CD4-positive, alpha-beta memory T cell (primary cell): ENCODE measurements at regions of chr10 and their contacts with region 1.

Region 1: DNA sequence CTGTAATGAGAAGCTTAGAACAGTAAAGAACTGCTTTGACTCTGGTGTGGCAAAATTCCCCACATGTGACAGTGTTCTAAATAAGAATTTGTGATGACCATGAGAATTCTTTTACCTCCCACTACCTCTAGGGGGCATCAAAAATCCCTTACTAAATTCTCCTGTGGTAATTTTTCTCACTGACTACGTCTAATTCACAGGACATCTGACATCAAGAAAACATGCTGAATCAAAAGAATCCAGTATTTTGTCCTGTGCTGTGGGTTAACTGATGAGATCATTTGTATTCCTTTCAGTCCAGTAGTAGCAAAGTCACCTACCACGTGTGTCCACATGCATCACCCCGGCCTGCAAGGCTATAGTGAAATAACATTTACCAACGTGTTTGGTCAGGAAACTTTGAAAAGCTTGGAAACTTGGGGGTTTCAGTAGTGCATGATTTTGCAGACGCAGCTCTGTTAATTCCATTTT is 103.8 kb downstream of the ATE1 start:
- DNase-seq: peak in 3 of 5 donors; percentile 8 to 15 (median 10)
- H3K4me3 ChIP-seq: no peak overlapping the region
- H3K4me3 Mint-ChIP-seq: no peak overlapping the region
- H3K27ac ChIP-seq: no peak overlapping the region
- H3K27ac Mint-ChIP-seq: no peak overlapping the region
- H3K4me1 ChIP-seq: no peaks in the 10 kb centered on the region
- H3K4me1 Mint-ChIP-seq: peaks cover 0 to 5% (median 1%) of the 10 kb centered on the region in 4 donors
- H3K27me3 ChIP-seq: no peaks in the 10 kb centered on the region
- H3K27me3 Mint-ChIP-seq: no peaks in the 10 kb centered on the region

Region 2: GRCh38 chr10:121804460-121804859 is 19.6 kb before region 1 on chr10:
- CTCF ChIA-PET with region 1: interaction called, 13 read pairs
- POLR2A ChIA-PET with region 1: no interaction called
- intact Hi-C with region 1: no loop called
- DNase-seq: no peak
- H3K4me3 ChIP-seq: no peak overlapping the region
- H3K4me3 Mint-ChIP-seq: no peak overlapping the region
- H3K27ac ChIP-seq: no peak overlapping the region
- H3K27ac Mint-ChIP-seq: no peak overlapping the region
- H3K4me1 ChIP-seq: no peaks in the 10 kb centered on the region
- H3K4me1 Mint-ChIP-seq: peaks cover 0 to 4% (median 0%) of the 10 kb centered on the region in 4 donors
- H3K27me3 ChIP-seq: no peaks in the 10 kb centered on the region
- H3K27me3 Mint-ChIP-seq: no peaks in the 10 kb centered on the region

Region 3: GRCh38 chr10:121813857-121814256 is 10.2 kb before region 1 on chr10:
- CTCF ChIA-PET with region 1: interaction called, 10 read pairs
- POLR2A ChIA-PET with region 1: no interaction called
- intact Hi-C with region 1: no loop called
- DNase-seq: no peak
- H3K4me3 ChIP-seq: no peak overlapping the region
- H3K4me3 Mint-ChIP-seq: no peak overlapping the region
- H3K27ac ChIP-seq: no peak overlapping the region
- H3K27ac Mint-ChIP-seq: no peak overlapping the region
- H3K4me1 ChIP-seq: no peaks in the 10 kb centered on the region
- H3K4me1 Mint-ChIP-seq: peaks cover 0 to 2% (median under 1%) of the 10 kb centered on the region in 4 donors
- H3K27me3 ChIP-seq: no peaks in the 10 kb centered on the region
- H3K27me3 Mint-ChIP-seq: no peaks in the 10 kb centered on the region

Region 4: GRCh38 chr10:121841862-121842261 is 17.8 kb after region 1 on chr10:
- CTCF ChIA-PET with region 1: interaction called, 15 read pairs
- POLR2A ChIA-PET with region 1: no interaction called
- intact Hi-C with region 1: loop called (anchors 2 kb)
- DNase-seq: no peak
- H3K4me3 ChIP-seq: no peak overlapping the region
- H3K4me3 Mint-ChIP-seq: no peak overlapping the region
- H3K27ac ChIP-seq: no peak overlapping the region
- H3K27ac Mint-ChIP-seq: no peak overlapping the region
- H3K4me1 ChIP-seq: no peaks in the 10 kb centered on the region
- H3K4me1 Mint-ChIP-seq: peaks cover 0 to 9% (median 4%) of the 10 kb centered on the region in 4 donors
- H3K27me3 ChIP-seq: no peaks in the 10 kb centered on the region
- H3K27me3 Mint-ChIP-seq: no peaks in the 10 kb centered on the region

Region 5: GRCh38 chr10:121886997-121887622 is 63.1 kb after region 1 on chr10:
- CTCF ChIA-PET with region 1: interaction called, 8 read pairs
- POLR2A ChIA-PET with region 1: no interaction called
- intact Hi-C with region 1: loop called (anchors 5 kb)
- DNase-seq: peak in 4 of 5 donors; percentile 17 to 26 (median 24)
- H3K4me3 ChIP-seq: no peak overlapping the region
- H3K4me3 Mint-ChIP-seq: no peak overlapping the region
- H3K27ac ChIP-seq: no peak overlapping the region
- H3K27ac Mint-ChIP-seq: peak overlapping the region in 1 of 7 donors; percentile 52
- H3K4me1 ChIP-seq: no peaks in the 10 kb centered on the region
- H3K4me1 Mint-ChIP-seq: peaks cover 0 to 5% (median under 1%) of the 10 kb centered on the region in 4 donors
- H3K27me3 ChIP-seq: no peaks in the 10 kb centered on the region
- H3K27me3 Mint-ChIP-seq: no peaks in the 10 kb centered on the region